ENCODE measurements at regions of chr7 and their contacts with region 1.

Region 1: DNA sequence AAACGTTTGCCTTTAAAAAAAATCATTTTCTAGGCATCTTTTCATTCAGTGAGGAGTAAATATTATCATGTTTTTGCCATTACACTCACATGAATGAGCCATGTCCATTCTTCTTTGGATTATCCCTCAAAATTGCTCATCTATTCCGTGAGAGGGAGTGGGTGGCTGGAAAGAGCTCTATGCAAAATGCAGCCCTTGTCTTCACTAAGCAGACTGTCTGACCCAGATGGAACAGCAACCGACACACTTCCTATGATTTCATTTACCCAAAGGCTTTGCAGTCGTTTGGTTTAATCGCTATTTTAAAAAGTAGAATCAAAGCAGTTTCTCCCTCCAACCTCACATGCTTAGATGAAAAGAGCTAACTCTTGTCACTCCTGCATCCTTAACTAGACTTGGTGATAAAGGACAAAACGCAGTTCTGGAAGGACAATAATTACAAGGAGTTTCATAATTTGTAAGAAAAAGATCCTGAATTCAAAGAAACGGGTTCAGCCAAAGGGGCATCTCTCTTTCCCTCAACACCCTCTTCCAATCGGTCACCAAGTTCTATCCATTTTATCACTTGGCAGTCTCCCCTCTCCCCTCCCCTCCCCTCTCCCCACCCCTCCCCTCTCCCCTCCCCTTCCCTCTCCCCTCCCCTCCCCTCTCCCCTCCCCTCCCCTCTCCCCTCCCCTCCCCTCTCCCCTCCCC is 198.1 kb upstream of the STK17A start:
- DNase-seq: no peak
- H3K4me3 ChIP-seq: no peak overlapping the region
- CTCF ChIP-seq: no peak
- POLR2A ChIP-seq: no peak

Region 2: GRCh38 chr7:42479816-42480633 is 904.7 kb before region 1 on chr7:
- intact Hi-C with region 1: loop called (anchors 5 kb)
- DNase-seq: no peak
- H3K4me3 ChIP-seq: no peak overlapping the region
- CTCF ChIP-seq: no peak
- POLR2A ChIP-seq: no peak

Region 3: GRCh38 chr7:43314379-43315189 is 70.2 kb before region 1 on chr7:
- intact Hi-C with region 1: no loop called
- DNase-seq: peak in 1 of 2 donors; percentile 53
- H3K4me3 ChIP-seq: no peak overlapping the region
- CTCF ChIP-seq: no peak
- POLR2A ChIP-seq: no peak

Measured in lower leg skin (tissue), 4 donors.